ENCODE measurements at regions of chrX and their contacts with region 1.

Region 1: DNA sequence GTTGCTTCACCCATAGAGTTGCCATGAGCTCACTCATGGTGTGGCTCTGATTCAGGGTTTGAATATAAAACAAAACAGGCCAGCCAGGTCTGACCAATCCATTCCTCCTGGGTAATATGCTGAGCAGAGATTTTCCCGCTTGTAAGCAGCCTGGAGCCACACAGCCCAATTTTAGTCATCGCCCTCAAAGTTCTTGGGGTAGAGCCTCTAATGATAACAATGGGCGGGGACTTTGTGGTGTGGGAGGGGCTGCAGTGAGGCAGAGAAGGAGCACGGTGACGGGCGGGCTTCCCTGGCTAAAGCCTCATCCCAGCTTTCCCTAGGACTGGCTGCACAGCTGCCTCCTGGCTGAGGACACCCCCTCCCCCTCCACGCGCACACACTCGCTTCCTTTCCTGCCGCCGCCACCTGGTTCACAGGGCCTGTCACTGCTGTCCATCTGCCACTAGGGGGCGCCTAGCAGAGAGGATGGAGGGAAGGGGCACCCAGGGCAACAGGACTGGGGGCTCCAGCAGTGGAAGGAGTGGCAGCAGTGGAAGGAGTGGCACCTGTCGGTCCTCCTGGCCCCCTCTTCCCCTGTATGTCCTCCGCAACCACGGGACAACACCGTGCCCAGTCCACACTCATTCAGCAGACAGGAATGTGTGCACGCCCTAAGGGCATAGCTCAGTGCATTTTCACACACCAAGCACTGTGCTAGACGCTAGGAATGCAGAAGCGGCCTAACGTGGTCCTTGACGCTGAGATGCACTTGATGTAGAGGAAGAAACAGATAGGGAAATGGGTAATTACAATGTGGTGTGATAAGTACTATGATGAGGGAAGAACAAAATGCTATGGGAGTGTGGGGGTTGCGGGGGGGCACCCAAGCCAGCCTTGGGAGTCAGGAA is 26.8 kb downstream of the PRPS1 start:
- DNase-seq: peak; percentile 74 to 85 (median 80)
- ATAC-seq: peak; percentile 90
- H3K4me3 ChIP-seq: no peak overlapping the region
- H3K27ac ChIP-seq: peak overlapping the region; percentile 1
- H3K4me1 ChIP-seq: no peaks in the 10 kb centered on the region
- H3K27me3 ChIP-seq: no peaks in the 10 kb centered on the region

Region 2: GRCh38 chrX:107537815-107538214 is 117.3 kb before region 1 on chrX:
- intact Hi-C with region 1: loop called in 1 of 4 experiments (anchors 10 kb)
- DNase-seq: peak in 1 of 3 donors; percentile 30
- ATAC-seq: peak in 1 of 2 donors; percentile 42
- H3K4me3 ChIP-seq: no peak overlapping the region
- H3K27ac ChIP-seq: no peak overlapping the region
- H3K4me1 ChIP-seq: no peaks in the 10 kb centered on the region
- H3K27me3 ChIP-seq: no peaks in the 10 kb centered on the region

Region 3: GRCh38 chrX:107894038-107894437 is 238.9 kb after region 1 on chrX:
- intact Hi-C with region 1: loop called in 2 of 4 experiments (anchors 5 to 10 kb)
- DNase-seq: no peak
- ATAC-seq: peak in 1 of 2 donors; percentile 52
- H3K4me3 ChIP-seq: no peak overlapping the region
- H3K27ac ChIP-seq: no peak overlapping the region
- H3K4me1 ChIP-seq: no peaks in the 10 kb centered on the region
- H3K27me3 ChIP-seq: no peaks in the 10 kb centered on the region